GM12878 (cell line): ENCODE measurements at regions of chr1 and their contacts with region 1.

Region 1: DNA sequence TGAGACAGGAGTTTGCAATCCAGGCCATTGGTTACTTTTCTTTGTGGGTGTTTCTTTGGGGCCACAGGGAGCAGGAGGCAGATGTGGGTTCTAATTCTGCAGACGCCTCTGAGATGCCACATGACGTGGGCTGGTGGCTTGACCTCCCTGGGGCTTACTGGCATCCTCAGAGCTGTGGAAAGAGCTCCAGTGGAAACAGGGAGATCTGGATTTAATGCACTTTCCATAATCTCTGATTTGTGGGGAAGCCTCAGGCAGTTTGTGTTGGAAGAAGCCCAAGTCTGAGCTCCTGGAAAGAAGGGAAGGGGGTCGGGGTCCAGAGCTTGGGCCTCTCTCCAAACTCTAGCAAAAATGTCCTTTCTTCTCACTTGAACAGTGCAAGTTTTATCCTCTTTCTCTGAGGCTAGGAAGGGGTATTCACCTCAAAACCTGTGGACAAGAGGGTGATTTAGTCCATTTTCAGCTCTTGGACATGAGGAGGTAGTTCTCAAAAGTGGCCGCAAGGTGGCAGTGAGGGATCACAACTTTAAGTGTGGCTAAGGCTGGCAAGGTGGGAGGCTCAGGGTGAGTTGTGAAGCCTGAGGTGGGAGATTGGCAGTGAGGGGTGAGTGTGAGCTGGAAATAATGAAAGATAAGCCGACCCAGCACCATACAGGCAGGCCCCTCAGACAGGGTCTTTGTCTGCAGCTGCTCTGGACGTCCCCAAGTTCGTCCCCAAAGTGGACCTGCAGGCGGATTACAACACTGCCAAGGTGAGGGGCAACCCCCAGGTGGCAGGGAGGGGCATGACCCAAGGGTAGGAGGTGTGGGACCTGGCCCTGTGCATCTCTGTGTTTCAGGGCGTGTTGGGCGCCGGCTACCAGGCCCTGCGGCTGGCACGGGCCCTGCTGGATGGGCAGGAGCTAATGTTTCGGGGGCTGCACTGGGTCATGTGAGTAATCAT is 9.2 kb downstream of the IKBKE start:
- DNase-seq: no peak
- ATAC-seq: peak; percentile 77
- H3K4me3 ChIP-seq: no peak overlapping the region
- H3K27ac ChIP-seq: no peak overlapping the region
- H3K4me1 ChIP-seq: peaks cover 17% of the 10 kb centered on the region
- H3K27me3 ChIP-seq: no peaks in the 10 kb centered on the region
- CTCF ChIP-seq: peak; percentile 77 to 87 (median 84)
- EP300 ChIP-seq: no peak
- POLR2A ChIP-seq: no peak
- RAD21 ChIP-seq: peak; percentile 80

Region 2: DNA sequence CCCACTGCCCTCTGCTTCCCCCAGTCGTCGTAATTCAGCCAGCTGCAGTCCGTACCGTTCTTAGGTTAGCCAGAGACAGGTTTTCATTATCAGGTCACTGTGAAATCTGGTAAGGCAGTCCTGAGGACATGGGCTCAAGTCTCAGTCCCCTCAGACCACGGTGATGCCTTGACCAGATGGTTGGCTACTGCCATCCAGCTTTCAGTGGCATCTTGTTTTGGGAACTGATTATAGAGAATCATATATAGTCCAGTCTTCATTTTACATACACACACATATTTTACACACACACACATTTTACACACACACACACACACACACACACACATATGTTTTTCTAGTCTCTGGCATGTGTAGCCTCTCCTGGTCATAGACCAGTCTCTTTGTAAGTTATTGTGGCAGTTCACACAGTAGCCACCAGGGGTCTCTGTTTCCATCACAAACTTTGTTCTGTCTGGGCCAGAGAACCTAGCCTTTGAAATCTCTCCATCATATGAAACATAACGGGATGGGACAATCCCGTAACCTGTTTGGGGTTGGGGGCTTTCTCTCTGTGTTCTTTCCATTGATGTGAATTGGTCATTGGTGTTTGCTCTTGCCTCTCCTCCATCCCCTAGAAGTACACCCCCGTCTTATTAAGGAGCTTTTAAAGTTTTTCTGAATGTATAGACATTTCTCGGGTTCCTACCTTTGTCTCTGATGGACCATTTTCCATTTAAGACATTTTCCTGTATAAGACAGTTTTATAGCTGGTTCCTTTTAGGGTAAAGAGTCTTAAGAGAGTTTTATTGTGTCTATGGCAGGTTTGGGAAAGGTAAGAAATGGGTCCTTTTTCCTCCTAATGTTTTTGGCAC is 17.6 kb before region 1 on chr1:
- CTCF ChIA-PET with region 1: interaction called, 199 read pairs
- POLR2A ChIA-PET with region 1: interaction called, 7 read pairs
- RAD21 ChIA-PET with region 1: interaction called, 22 read pairs
- SMC1A ChIA-PET with region 1: interaction called, 70 read pairs
- in situ Hi-C with region 1: no loop called
- intact Hi-C with region 1: loop called (anchors 2 kb)
- DNase-seq: no peak
- ATAC-seq: peak; percentile 90
- H3K4me3 ChIP-seq: no peak overlapping the region
- H3K27ac ChIP-seq: no peak overlapping the region
- H3K4me1 ChIP-seq: peaks cover 23% of the 10 kb centered on the region
- H3K27me3 ChIP-seq: no peaks in the 10 kb centered on the region
- CTCF ChIP-seq: peak; percentile 76 to 86 (median 84)
- EP300 ChIP-seq: no peak
- POLR2A ChIP-seq: no peak
- RAD21 ChIP-seq: peak; percentile 73

Region 3: GRCh38 chr1:206489980-206490770 is 10.7 kb after region 1 on chr1:
- CTCF ChIA-PET with region 1: interaction called, 57 read pairs
- POLR2A ChIA-PET with region 1: no interaction called
- RAD21 ChIA-PET with region 1: interaction called, 9 read pairs
- SMC1A ChIA-PET with region 1: interaction called, 16 read pairs
- in situ Hi-C with region 1: no loop called
- intact Hi-C with region 1: no loop called
- DNase-seq: no peak
- ATAC-seq: peak; percentile 99
- H3K4me3 ChIP-seq: no peak overlapping the region
- H3K27ac ChIP-seq: no peak overlapping the region
- H3K4me1 ChIP-seq: peaks cover 5% of the 10 kb centered on the region
- H3K27me3 ChIP-seq: no peaks in the 10 kb centered on the region
- CTCF ChIP-seq: peak; percentile 91 to 97 (median 96)
- EP300 ChIP-seq: no peak
- POLR2A ChIP-seq: no peak
- RAD21 ChIP-seq: peak; percentile 97

Region 4: DNA sequence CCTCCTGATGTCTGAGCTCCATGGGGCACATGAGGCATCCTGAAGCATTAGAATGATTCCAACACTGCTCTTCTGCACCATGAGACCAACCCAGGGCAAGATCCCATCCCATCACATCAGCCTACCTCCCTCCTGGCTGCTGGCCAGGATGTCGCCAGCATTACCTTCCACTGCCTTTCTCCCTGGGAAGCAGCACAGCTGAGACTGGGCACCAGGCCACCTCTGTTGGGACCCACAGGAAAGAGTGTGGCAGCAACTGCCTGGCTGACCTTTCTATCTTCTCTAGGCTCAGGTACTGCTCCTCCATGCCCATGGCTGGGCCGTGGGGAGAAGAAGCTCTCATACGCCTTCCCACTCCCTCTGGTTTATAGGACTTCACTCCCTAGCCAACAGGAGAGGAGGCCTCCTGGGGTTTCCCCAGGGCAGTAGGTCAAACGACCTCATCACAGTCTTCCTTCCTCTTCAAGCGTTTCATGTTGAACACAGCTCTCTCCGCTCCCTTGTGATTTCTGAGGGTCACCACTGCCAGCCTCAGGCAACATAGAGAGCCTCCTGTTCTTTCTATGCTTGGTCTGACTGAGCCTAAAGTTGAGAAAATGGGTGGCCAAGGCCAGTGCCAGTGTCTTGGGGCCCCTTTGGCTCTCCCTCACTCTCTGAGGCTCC is 16.8 kb after region 1 on chr1:
- CTCF ChIA-PET with region 1: interaction called, 57 read pairs
- POLR2A ChIA-PET with region 1: interaction called, 7 read pairs
- RAD21 ChIA-PET with region 1: interaction called, 9 read pairs
- SMC1A ChIA-PET with region 1: interaction called, 16 read pairs
- in situ Hi-C with region 1: no loop called
- intact Hi-C with region 1: no loop called
- DNase-seq: no peak
- ATAC-seq: peak; percentile 88
- H3K4me3 ChIP-seq: peak overlapping the region; percentile 34; the same call in 1 of the 2 replicates
- H3K27ac ChIP-seq: peak overlapping the region; percentile 90
- H3K4me1 ChIP-seq: peaks cover 39% of the 10 kb centered on the region
- H3K27me3 ChIP-seq: no peaks in the 10 kb centered on the region
- CTCF ChIP-seq: no peak
- EP300 ChIP-seq: 0 out of 4 replicates have a peak, but pooled peaks of 1 of the 2 experiments have one; percentile 29
- POLR2A ChIP-seq: no peak
- RAD21 ChIP-seq: no peak

Region 5: DNA sequence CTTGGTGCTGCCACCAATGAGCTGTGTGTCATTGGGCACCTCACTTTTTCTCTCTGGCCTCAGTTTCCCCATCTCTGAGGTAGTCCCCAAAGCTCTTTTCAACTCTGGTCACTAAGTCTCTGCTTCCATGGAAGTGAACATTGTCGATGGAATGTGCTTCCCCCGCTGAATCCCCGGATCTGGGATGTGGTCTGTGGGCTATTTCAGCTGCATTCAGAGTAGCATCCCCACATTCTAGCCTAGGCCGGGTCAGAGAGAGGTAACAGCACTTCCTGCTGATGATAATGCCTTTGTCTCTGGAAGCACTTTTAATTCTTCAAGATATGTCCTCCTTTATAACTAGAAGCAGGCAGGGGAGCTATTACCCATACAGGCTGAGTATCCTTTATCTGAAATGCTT is 57.7 kb after region 1 on chr1:
- CTCF ChIA-PET with region 1: interaction called, 13 read pairs
- POLR2A ChIA-PET with region 1: no interaction called
- RAD21 ChIA-PET with region 1: no interaction called
- SMC1A ChIA-PET with region 1: interaction called, 4 read pairs
- in situ Hi-C with region 1: no loop called
- intact Hi-C with region 1: no loop called
- DNase-seq: no peak
- ATAC-seq: no peak
- H3K4me3 ChIP-seq: no peak overlapping the region
- H3K27ac ChIP-seq: no peak overlapping the region
- H3K4me1 ChIP-seq: no peaks in the 10 kb centered on the region
- H3K27me3 ChIP-seq: no peaks in the 10 kb centered on the region
- CTCF ChIP-seq: no peak
- EP300 ChIP-seq: no peak
- POLR2A ChIP-seq: no peak
- RAD21 ChIP-seq: no peak

Region 6: DNA sequence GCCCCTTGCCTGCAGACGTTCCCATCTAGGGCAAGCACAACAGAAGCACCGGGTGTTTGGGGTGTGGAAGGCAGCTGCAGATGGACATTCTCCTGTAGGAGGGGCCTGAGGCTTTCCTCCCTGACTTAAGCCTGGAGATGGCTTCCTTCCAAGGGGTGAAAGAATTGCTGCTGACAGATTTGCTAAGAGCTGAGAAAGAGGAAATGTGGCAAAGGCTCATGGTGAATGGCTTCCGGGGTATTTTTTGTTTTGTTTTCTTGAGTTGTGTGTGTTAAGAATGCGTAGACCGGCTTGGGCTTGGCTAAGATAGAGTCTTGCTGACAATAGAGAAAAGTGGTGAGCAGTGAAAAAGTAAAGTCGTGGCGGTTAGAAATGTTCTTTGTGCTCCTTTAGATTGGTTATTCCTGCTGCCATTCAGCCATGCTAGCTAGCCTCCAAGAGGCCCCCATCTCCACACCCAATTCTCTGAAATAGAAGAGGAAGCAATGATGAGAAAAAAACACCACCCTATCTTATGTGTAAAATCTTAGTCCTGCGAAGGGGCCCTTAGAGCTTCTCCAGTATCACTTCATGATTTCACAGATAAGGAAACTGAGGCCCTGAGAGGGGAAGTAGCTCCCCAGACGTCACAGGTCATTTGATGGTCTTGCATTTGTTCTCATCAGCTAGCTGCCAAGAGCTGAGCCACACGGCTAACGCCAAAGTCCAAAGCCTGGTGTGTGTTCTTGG is 95.9 kb after region 1 on chr1:
- CTCF ChIA-PET with region 1: interaction called, 28 read pairs
- POLR2A ChIA-PET with region 1: interaction called, 6 read pairs
- RAD21 ChIA-PET with region 1: interaction called, 8 read pairs
- SMC1A ChIA-PET with region 1: interaction called, 6 read pairs
- in situ Hi-C with region 1: no loop called
- intact Hi-C with region 1: no loop called
- DNase-seq: no peak
- ATAC-seq: peak; percentile 57
- H3K4me3 ChIP-seq: peak overlapping the region; percentile 66
- H3K27ac ChIP-seq: peak overlapping the region; percentile 92
- H3K4me1 ChIP-seq: peaks cover 62% of the 10 kb centered on the region
- H3K27me3 ChIP-seq: no peaks in the 10 kb centered on the region
- CTCF ChIP-seq: no peak
- EP300 ChIP-seq: 0 out of 4 replicates have a peak, but pooled peaks of 1 of the 2 experiments have one; percentile 8
- POLR2A ChIP-seq: no peak
- RAD21 ChIP-seq: no peak

Region 7: DNA sequence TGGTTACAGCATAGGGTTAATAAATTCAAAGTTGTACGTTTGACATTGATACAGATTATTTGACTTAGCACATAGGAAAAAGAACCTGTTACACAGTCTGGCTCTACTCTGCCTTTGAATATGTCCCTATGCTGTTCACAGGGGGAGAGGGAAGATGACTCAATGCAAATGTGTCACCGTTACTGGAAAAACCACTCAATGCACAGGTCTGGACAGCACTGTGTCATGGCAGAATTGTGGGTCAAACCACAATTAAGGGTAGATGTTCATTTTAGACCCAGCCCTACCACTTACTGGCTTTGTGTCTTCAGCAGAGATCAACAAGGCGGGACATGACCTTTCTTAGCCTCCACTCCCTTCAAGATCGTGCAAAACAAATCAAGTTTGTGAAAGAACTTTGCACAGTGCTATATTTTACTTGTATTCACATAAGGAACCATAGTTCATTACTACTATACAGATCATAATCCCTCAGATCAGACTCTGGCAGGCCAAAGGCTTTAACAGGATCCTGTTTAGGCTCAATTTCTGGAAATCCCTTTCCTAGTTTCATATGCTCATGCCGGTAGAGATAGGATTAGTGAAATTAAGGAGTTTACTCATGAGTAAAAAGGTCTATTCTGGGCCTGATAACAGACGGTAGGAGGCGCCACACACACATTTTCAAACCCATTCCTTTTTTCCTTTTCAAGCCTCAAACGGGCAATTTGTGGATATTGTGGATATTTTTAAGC is 110.7 kb after region 1 on chr1:
- CTCF ChIA-PET with region 1: interaction called, 43 read pairs
- POLR2A ChIA-PET with region 1: interaction called, 3 read pairs
- RAD21 ChIA-PET with region 1: interaction called, 4 read pairs
- SMC1A ChIA-PET with region 1: interaction called, 13 read pairs
- in situ Hi-C with region 1: no loop called
- intact Hi-C with region 1: no loop called
- DNase-seq: no peak
- ATAC-seq: peak; percentile 89
- H3K4me3 ChIP-seq: no peak overlapping the region
- H3K27ac ChIP-seq: peak overlapping the region; percentile 34
- H3K4me1 ChIP-seq: peaks cover 6% of the 10 kb centered on the region; the same call in 1 of the 2 replicates
- H3K27me3 ChIP-seq: no peaks in the 10 kb centered on the region
- CTCF ChIP-seq: peak; percentile 38 to 58 (median 42); a peak in 5 of 6 replicates
- EP300 ChIP-seq: no peak
- POLR2A ChIP-seq: peak; percentile 48; the same call in 1 of the 2 replicates
- RAD21 ChIP-seq: 0 out of 2 replicates have a peak, but pooled peaks have one; percentile 26